Caco-2 (cell line): ENCODE measurements at regions of chr2 and their contacts with region 1.

Region 1: DNA sequence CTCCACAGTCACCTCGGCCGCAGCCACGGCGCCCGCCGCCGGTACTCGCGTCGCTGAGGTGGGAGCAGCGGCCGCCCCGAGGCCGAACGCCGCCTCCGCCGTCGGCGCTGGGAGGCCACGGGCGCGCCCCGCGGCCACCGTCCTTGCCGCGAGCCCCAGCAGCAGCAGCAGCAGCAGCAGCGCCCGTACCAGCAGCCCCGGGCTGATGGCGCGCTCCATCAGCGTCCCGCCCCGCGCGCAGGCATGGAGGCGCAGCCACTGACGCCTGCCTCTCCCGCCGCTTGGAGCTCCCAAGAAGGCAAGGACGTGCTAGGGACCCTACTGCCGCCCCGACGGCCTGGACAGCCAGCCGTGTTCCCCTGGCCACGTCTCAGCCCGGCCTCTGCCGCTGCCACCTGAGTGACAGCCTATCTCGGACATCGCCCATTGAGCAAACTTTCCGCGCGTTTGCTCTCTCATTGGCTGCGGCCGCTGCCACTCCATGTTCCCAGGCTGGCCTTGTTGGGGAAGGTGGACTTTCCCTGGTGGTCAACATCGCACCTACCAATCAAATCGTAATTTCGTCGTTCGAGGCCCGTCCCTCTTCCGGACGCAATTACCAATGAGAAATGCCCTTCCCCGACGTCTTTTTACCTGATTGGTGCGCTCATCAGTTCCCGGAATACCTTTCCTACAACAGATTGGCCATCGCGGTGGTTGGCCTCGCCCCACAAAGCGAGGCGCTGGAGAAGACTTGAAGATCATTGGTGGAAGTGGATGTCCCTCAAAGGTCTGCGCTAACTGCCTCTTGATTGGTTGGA is at the start of gene EIF2AK3:
- DNase-seq: peak; percentile 98 to 100
- H3K4me3 ChIP-seq: peak within 1 kb of the TSS; percentile 95
- H3K4me3 Mint-ChIP-seq: no peak within 1 kb of the TSS
- H3K27ac Mint-ChIP-seq: peak within 1 kb of the TSS; percentile 76
- H3K4me1 ChIP-seq: peaks cover 9% of the 10 kb centered on the region
- H3K4me1 Mint-ChIP-seq: no peaks in the 10 kb centered on the region
- H3K27me3 ChIP-seq: no peaks in the 10 kb centered on the region
- H3K27me3 Mint-ChIP-seq: no peaks in the 10 kb centered on the region
- CTCF ChIP-seq: no peak
- total RNA-seq, gene EIF2AK3: 24.6 and 26.8 TPM in 2 replicates

Region 2: DNA sequence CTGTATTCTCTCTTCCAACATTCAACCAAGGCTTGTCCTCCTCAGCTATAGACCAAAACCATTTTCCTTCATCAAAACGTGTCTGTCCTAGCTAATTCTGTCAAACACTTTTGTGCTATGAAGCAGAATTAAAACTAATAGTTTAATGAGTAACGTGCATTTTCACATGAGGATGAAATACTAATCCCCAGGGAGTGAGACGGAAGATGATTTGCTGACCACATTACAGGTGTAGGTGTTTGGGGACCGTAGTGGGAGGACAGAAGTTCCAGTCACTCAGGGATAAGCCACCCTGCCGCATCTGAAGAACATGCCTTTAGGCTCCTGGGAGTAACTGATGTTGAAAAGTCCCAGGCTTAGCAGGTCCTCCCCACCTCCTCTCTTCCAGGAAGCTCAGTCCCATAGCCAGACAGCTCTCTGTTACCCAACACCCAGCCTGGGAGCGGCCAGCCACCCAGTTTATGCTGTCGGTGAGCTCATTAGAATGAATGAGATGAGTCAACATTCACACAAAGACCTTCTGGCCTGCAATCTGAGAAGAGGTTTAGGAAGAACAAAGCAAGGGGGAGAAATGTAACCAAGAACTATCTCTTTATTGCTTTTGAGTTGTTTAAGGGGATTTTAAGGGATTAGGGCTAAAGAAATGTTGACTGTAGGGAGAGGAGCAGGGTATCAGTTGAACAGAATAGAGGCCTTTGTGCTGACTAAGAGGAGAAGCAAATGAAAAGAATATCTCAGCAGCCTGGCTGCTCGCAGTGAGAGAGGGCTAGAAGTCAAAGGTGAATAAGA is 297.2 kb before region 1 on chr2:
- CTCF ChIA-PET with region 1: no interaction called
- POLR2A ChIA-PET with region 1: no interaction called
- intact Hi-C with region 1: loop called (anchors 1 kb)
- DNase-seq: peak; percentile 93
- H3K4me3 ChIP-seq: no peak overlapping the region
- H3K4me3 Mint-ChIP-seq: peak overlapping the region; percentile 1
- H3K27ac Mint-ChIP-seq: peak overlapping the region; percentile 14
- H3K4me1 ChIP-seq: peaks cover 15% of the 10 kb centered on the region
- H3K4me1 Mint-ChIP-seq: peaks cover 22% of the 10 kb centered on the region
- H3K27me3 ChIP-seq: no peaks in the 10 kb centered on the region; the same call in 1 of the 2 replicates
- H3K27me3 Mint-ChIP-seq: peaks cover 27% of the 10 kb centered on the region
- CTCF ChIP-seq: no peak

Region 3: GRCh38 chr2:88554189-88554588 is 73.1 kb before region 1 on chr2:
- CTCF ChIA-PET with region 1: interaction called, 10 read pairs
- POLR2A ChIA-PET with region 1: no interaction called
- intact Hi-C with region 1: no loop called
- DNase-seq: peak in 1 of 2 experiments; percentile 20
- H3K4me3 ChIP-seq: no peak overlapping the region
- H3K4me3 Mint-ChIP-seq: no peak overlapping the region
- H3K27ac Mint-ChIP-seq: no peak overlapping the region
- H3K4me1 ChIP-seq: no peaks in the 10 kb centered on the region
- H3K4me1 Mint-ChIP-seq: no peaks in the 10 kb centered on the region
- H3K27me3 ChIP-seq: no peaks in the 10 kb centered on the region
- H3K27me3 Mint-ChIP-seq: no peaks in the 10 kb centered on the region
- CTCF ChIP-seq: peak; percentile 29 to 59

Region 4: DNA sequence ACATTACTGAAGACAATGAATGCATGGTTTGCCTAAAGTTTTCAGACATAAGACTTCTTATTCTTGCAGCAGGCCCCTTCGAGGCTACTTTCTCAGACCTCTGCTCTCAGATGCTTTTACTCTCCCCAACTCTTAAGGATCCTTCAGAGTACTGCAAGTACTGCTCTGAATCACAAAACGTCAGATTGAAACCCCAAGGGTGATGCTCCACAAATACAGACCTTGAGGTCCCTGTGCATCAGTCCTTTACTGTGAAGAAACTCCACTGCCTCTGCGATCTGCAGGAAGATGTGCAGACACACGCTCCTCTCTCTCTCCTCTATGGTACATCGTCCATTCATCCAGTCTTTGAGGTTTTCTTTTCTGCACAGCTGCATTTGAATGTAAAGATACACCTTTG is 52.8 kb before region 1 on chr2:
- CTCF ChIA-PET with region 1: no interaction called
- POLR2A ChIA-PET with region 1: no interaction called
- intact Hi-C with region 1: no loop called
- DNase-seq: no peak
- H3K4me3 ChIP-seq: no peak overlapping the region
- H3K4me3 Mint-ChIP-seq: no peak overlapping the region
- H3K27ac Mint-ChIP-seq: no peak overlapping the region
- H3K4me1 ChIP-seq: no peaks in the 10 kb centered on the region; the same call in 1 of the 2 replicates
- H3K4me1 Mint-ChIP-seq: no peaks in the 10 kb centered on the region
- H3K27me3 ChIP-seq: no peaks in the 10 kb centered on the region
- H3K27me3 Mint-ChIP-seq: no peaks in the 10 kb centered on the region
- CTCF ChIP-seq: no peak

Region 5: GRCh38 chr2:88590998-88591613 is 36.1 kb before region 1 on chr2:
- CTCF ChIA-PET with region 1: no interaction called
- POLR2A ChIA-PET with region 1: no interaction called
- intact Hi-C with region 1: loop called (anchors 5 kb)
- DNase-seq: peak; percentile 47 to 75
- H3K4me3 ChIP-seq: no peak overlapping the region
- H3K4me3 Mint-ChIP-seq: no peak overlapping the region
- H3K27ac Mint-ChIP-seq: no peak overlapping the region
- H3K4me1 ChIP-seq: peaks cover 11% of the 10 kb centered on the region
- H3K4me1 Mint-ChIP-seq: no peaks in the 10 kb centered on the region
- H3K27me3 ChIP-seq: no peaks in the 10 kb centered on the region
- H3K27me3 Mint-ChIP-seq: no peaks in the 10 kb centered on the region
- CTCF ChIP-seq: peak; percentile 76 to 78

Region 6: DNA sequence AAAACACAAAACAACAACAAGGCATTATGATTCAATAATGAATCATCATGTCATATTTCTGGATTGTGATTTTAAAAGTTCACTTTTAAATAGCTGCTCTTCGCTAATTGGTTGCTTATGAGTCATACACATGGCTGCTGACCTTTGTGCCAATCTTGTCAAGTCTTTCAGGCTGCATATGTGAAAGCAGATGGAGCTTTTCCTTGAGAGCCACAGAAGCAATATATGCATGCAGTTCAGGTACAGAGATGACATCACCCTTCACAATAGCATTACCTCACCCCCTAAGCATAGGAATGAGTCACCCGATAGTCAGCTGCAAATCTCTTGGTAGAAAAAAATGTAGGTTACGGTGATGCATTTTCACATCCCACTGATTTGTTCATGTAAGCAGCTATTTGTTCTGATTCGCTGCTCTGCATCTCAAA is 27.2 kb before region 1 on chr2:
- CTCF ChIA-PET with region 1: no interaction called
- POLR2A ChIA-PET with region 1: interaction called, 12 read pairs
- intact Hi-C with region 1: loop called (anchors 1 kb)
- DNase-seq: peak; percentile 66 to 75
- H3K4me3 ChIP-seq: no peak overlapping the region
- H3K4me3 Mint-ChIP-seq: peak overlapping the region; percentile 27
- H3K27ac Mint-ChIP-seq: peak overlapping the region; percentile 51
- H3K4me1 ChIP-seq: peaks cover 29% of the 10 kb centered on the region
- H3K4me1 Mint-ChIP-seq: peaks cover 33% of the 10 kb centered on the region
- H3K27me3 ChIP-seq: no peaks in the 10 kb centered on the region
- H3K27me3 Mint-ChIP-seq: no peaks in the 10 kb centered on the region
- CTCF ChIP-seq: no peak

Region 7: GRCh38 chr2:88651660-88652059 is 24.4 kb after region 1 on chr2:
- CTCF ChIA-PET with region 1: interaction called, 6 read pairs
- POLR2A ChIA-PET with region 1: interaction called, 23 read pairs
- intact Hi-C with region 1: loop called (anchors 1 kb)
- DNase-seq: peak; percentile 84 to 85
- H3K4me3 ChIP-seq: no peak overlapping the region
- H3K4me3 Mint-ChIP-seq: peak overlapping the region; percentile 26
- H3K27ac Mint-ChIP-seq: peak overlapping the region; percentile 85
- H3K4me1 ChIP-seq: peaks cover 23% of the 10 kb centered on the region
- H3K4me1 Mint-ChIP-seq: peaks cover 12% of the 10 kb centered on the region
- H3K27me3 ChIP-seq: no peaks in the 10 kb centered on the region
- H3K27me3 Mint-ChIP-seq: no peaks in the 10 kb centered on the region
- CTCF ChIP-seq: no peak

Region 8: GRCh38 chr2:88669371-88670214 is 42.3 kb after region 1 on chr2:
- CTCF ChIA-PET with region 1: interaction called, 10 read pairs
- POLR2A ChIA-PET with region 1: interaction called, 5 read pairs
- intact Hi-C with region 1: loop called (anchors 1 kb)
- DNase-seq: peak; percentile 49 to 68
- H3K4me3 ChIP-seq: no peak overlapping the region
- H3K4me3 Mint-ChIP-seq: no peak overlapping the region
- H3K27ac Mint-ChIP-seq: no peak overlapping the region
- H3K4me1 ChIP-seq: peaks cover 16% of the 10 kb centered on the region
- H3K4me1 Mint-ChIP-seq: peaks cover 17% of the 10 kb centered on the region
- H3K27me3 ChIP-seq: no peaks in the 10 kb centered on the region
- H3K27me3 Mint-ChIP-seq: no peaks in the 10 kb centered on the region
- CTCF ChIP-seq: peak; percentile 74 to 78

Region 9: GRCh38 chr2:88855620-88856408 is 228.6 kb after region 1 on chr2:
- CTCF ChIA-PET with region 1: no interaction called
- POLR2A ChIA-PET with region 1: no interaction called
- intact Hi-C with region 1: no loop called
- DNase-seq: no peak
- H3K4me3 ChIP-seq: no peak overlapping the region
- H3K4me3 Mint-ChIP-seq: no peak overlapping the region
- H3K27ac Mint-ChIP-seq: no peak overlapping the region
- H3K4me1 ChIP-seq: peaks cover 15% of the 10 kb centered on the region
- H3K4me1 Mint-ChIP-seq: peaks cover 13% of the 10 kb centered on the region
- H3K27me3 ChIP-seq: no peaks in the 10 kb centered on the region
- H3K27me3 Mint-ChIP-seq: peaks cover 10% of the 10 kb centered on the region
- CTCF ChIP-seq: no peak